CD4-positive, alpha-beta memory T cell (primary cell): ENCODE measurements at regions of chr1 and their contacts with region 1.

Region 1: GRCh38 chr1:32291708-32292492 is at the start of gene HDAC1:
- DNase-seq: peak; percentile 96 to 97 (median 97)
- H3K4me3 ChIP-seq: peak within 1 kb of the TSS; percentile 83 to 93
- H3K4me3 Mint-ChIP-seq: peak within 1 kb of the TSS; percentile 97 to 100 (median 99)
- H3K27ac ChIP-seq: peak within 1 kb of the TSS; percentile 93
- H3K27ac Mint-ChIP-seq: peak within 1 kb of the TSS; percentile 94 to 99 (median 96)
- H3K4me1 ChIP-seq: peaks cover 62% of the 10 kb centered on the region
- H3K4me1 Mint-ChIP-seq: peaks cover 32 to 64% (median 47%) of the 10 kb centered on the region in 4 donors
- H3K27me3 ChIP-seq: no peaks in the 10 kb centered on the region
- H3K27me3 Mint-ChIP-seq: peaks cover 0 to 2% of the 10 kb centered on the region in 2 donors
- total RNA-seq, gene HDAC1: 174 to 190 TPM

Region 2: DNA sequence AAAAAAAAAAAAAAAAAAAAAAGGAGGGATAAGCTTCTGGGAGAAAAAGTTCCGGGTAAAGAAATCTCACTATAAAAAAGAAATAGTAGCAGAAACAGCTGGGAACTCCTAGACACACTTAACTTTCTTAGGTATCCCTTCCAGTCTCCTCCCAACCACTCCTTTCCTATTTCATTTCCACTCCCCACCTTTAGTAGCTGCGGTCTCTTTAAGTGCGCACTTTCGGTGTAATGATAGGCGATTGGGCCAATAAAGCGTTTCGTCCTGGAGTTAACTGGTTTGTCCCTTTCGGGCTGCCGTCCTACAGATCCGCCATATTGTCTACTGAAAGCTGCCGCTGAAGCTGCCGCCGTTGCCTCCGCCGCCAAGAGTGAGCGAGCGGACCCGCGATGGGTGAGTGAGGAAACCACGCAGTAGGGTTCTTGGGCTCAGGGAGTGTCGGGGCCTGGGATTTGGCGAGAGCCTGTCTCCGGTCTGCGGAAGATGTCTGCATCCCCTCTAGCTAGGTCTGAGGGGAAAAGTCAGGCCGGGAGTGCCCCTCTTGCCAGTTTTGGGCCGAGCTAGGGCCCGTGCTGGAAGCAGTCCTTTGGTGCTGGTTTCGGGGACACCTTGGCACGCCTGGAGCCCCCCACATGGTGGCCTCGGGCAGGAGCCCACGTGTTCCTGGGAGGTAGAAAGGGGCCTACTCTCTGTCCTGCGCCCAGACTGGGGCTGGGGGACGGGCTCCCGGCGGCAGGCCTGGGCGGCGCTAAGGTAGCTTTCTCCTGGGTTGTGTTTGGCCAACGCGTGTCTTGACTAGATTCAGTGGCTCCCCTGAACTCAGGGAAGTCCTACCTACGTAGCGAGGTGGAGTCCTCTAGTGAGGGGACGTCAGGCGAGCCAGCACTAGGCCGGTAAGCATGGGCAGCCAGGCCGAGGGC is 183.9 kb before region 1 on chr1 and contains the start of gene KPNA6:
- CTCF ChIA-PET with region 1: no interaction called
- POLR2A ChIA-PET with region 1: interaction called, 6 read pairs
- intact Hi-C with region 1: loop called (anchors 5 kb)
- DNase-seq: peak; percentile 93 to 95 (median 94)
- H3K4me3 ChIP-seq: peak within 1 kb of the TSS; percentile 67 to 83
- H3K4me3 Mint-ChIP-seq: peak within 1 kb of the TSS; percentile 96 to 100 (median 100)
- H3K27ac ChIP-seq: peak within 1 kb of the TSS; percentile 94
- H3K27ac Mint-ChIP-seq: peak within 1 kb of the TSS; percentile 93 to 100 (median 97)
- H3K4me1 ChIP-seq: peaks cover 47% of the 10 kb centered on the region
- H3K4me1 Mint-ChIP-seq: peaks cover 31 to 62% (median 45%) of the 10 kb centered on the region in 4 donors
- H3K27me3 ChIP-seq: no peaks in the 10 kb centered on the region
- H3K27me3 Mint-ChIP-seq: no peaks in the 10 kb centered on the region
- total RNA-seq, gene KPNA6: 60.3 to 62.5 TPM

Region 3: GRCh38 chr1:32221980-32222755 is 69.7 kb before region 1 on chr1 and contains the starts of genes EIF3I and TMEM234:
- CTCF ChIA-PET with region 1: interaction called, 35 read pairs
- POLR2A ChIA-PET with region 1: interaction called, 18 read pairs
- intact Hi-C with region 1: loop called (anchors 2 kb)
- DNase-seq: peak; percentile 89 to 96 (median 91)
- H3K4me3 ChIP-seq: peak within 1 kb of the TSS; percentile 96 to 97
- H3K4me3 Mint-ChIP-seq: peak within 1 kb of the TSS; percentile 95 to 99 (median 97)
- H3K27ac ChIP-seq: peak within 1 kb of the TSS; percentile 99
- H3K27ac Mint-ChIP-seq: peak within 1 kb of the TSS; percentile 99 to 100 (median 99)
- H3K4me1 ChIP-seq: peaks cover 30% of the 10 kb centered on the region
- H3K4me1 Mint-ChIP-seq: peaks cover 23 to 59% (median 38%) of the 10 kb centered on the region in 4 donors
- H3K27me3 ChIP-seq: no peaks in the 10 kb centered on the region
- H3K27me3 Mint-ChIP-seq: no peaks in the 10 kb centered on the region
- total RNA-seq, gene EIF3I: 78.3 to 85.3 TPM
- total RNA-seq, gene TMEM234: 27.1 to 30.7 TPM

Region 4: DNA sequence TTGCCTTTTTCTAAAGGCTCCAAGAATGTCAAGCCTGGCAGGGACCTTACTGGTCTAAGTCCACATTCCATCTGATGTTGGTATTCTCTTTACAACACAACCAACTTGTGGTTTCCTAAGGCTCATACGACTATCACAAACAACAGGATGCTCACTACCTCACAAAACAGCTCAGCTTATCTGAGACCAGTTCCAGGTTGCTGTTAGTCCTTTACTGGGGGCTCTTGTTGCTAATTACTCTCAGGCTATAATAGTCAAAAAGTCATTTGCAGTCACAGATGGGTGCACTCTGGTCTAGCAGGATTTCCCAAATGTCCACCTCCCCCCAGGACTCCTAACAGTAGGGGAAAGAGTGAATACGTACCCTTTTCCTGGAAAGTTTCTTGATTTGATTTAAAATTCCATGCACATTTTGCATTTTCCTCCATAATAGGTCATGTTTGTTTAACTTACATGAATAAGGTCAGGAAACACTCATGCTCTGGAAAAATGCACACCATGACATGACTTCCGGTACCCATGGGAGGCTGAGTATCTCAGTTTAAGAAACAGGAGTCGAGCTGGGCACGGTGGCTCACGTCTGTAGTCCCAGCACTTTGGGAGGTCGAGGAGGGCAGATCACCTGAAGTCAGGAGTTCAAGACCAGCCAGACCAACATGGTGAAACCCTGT is 24.8 kb before region 1 on chr1:
- CTCF ChIA-PET with region 1: interaction called, 6 read pairs
- POLR2A ChIA-PET with region 1: interaction called, 24 read pairs
- intact Hi-C with region 1: no loop called
- DNase-seq: peak in 3 of 5 donors; percentile 37 to 50 (median 48)
- H3K4me3 ChIP-seq: no peak overlapping the region
- H3K4me3 Mint-ChIP-seq: peak overlapping the region; percentile 74 to 92 (median 85)
- H3K27ac ChIP-seq: peak overlapping the region; percentile 42
- H3K27ac Mint-ChIP-seq: peak overlapping the region; percentile 82 to 99 (median 98)
- H3K4me1 ChIP-seq: peaks cover 82% of the 10 kb centered on the region
- H3K4me1 Mint-ChIP-seq: peaks cover 42 to 71% (median 54%) of the 10 kb centered on the region in 4 donors
- H3K27me3 ChIP-seq: no peaks in the 10 kb centered on the region
- H3K27me3 Mint-ChIP-seq: no peaks in the 10 kb centered on the region

Region 5: DNA sequence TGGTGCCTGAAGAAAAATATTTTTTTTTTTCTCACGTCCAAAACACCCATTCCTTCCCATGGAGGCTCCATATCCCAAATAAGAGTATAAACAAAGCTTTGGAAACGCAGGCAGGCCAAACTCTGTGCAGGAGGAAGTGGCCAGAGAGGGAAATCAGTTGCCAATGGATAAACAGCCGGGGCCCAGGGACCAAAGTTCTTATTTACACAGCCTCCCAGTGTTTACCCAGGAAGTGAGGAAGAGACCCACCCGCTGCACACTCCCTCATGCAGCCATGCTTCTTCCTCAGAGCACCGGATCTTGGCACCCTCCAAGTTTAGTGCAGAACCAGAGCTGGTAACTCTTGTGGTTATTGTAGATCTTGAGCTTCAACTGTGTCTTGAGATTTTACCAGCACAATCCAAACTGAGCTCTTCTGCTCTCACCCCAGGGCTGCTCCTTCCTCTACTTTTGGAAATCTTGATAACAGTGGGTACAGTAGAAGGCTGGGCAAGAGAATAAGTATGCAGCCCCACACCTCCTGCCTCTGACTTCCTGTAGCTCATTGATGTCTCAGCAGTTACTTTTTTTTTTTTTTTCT is 29.9 kb after region 1 on chr1:
- CTCF ChIA-PET with region 1: interaction called, 18 read pairs
- POLR2A ChIA-PET with region 1: interaction called, 70 read pairs
- intact Hi-C with region 1: no loop called
- DNase-seq: peak; percentile 55 to 66 (median 59)
- H3K4me3 ChIP-seq: no peak overlapping the region
- H3K4me3 Mint-ChIP-seq: peak overlapping the region; percentile 72 to 85 (median 78)
- H3K27ac ChIP-seq: peak overlapping the region; percentile 18
- H3K27ac Mint-ChIP-seq: peak overlapping the region; percentile 88 to 96 (median 90)
- H3K4me1 ChIP-seq: peaks cover 63% of the 10 kb centered on the region
- H3K4me1 Mint-ChIP-seq: peaks cover 26 to 55% (median 42%) of the 10 kb centered on the region in 4 donors
- H3K27me3 ChIP-seq: no peaks in the 10 kb centered on the region
- H3K27me3 Mint-ChIP-seq: no peaks in the 10 kb centered on the region

Region 6: GRCh38 chr1:32351399-32352238 is 59.7 kb after region 1 on chr1:
- CTCF ChIA-PET with region 1: interaction called, 7 read pairs
- POLR2A ChIA-PET with region 1: interaction called, 11 read pairs
- intact Hi-C with region 1: loop called (anchors 1 kb)
- DNase-seq: peak; percentile 90 to 94 (median 91)
- H3K4me3 ChIP-seq: peak overlapping the region; percentile 52 to 65
- H3K4me3 Mint-ChIP-seq: peak overlapping the region; percentile 71 to 90 (median 82)
- H3K27ac ChIP-seq: peak overlapping the region; percentile 71
- H3K27ac Mint-ChIP-seq: peak overlapping the region; percentile 86 to 97 (median 92)
- H3K4me1 ChIP-seq: peaks cover 39% of the 10 kb centered on the region
- H3K4me1 Mint-ChIP-seq: peaks cover 22 to 62% (median 39%) of the 10 kb centered on the region in 4 donors
- H3K27me3 ChIP-seq: no peaks in the 10 kb centered on the region
- H3K27me3 Mint-ChIP-seq: no peaks in the 10 kb centered on the region